ENCODE measurements at regions of chr2 and their contacts with region 1.

Region 1: GRCh38 chr2:60881047-60881932 is at the start of gene REL:
- DNase-seq: peak; percentile 96
- H3K4me3 Mint-ChIP-seq: peak within 1 kb of the TSS; percentile 91
- H3K27ac Mint-ChIP-seq: peak within 1 kb of the TSS; percentile 97
- H3K4me1 Mint-ChIP-seq: peaks cover 9% of the 10 kb centered on the region
- H3K27me3 Mint-ChIP-seq: no peaks in the 10 kb centered on the region
- CTCF ChIP-seq: no peak
- total RNA-seq, gene REL: 20.3 and 23.4 TPM in 2 replicates

Region 2: GRCh38 chr2:59706729-59707128 is 1174.6 kb before region 1 on chr2:
- CTCF ChIA-PET with region 1: no interaction called
- intact Hi-C with region 1: no loop called
- DNase-seq: no peak
- H3K4me3 Mint-ChIP-seq: no peak overlapping the region
- H3K27ac Mint-ChIP-seq: no peak overlapping the region
- H3K4me1 Mint-ChIP-seq: no peaks in the 10 kb centered on the region
- H3K27me3 Mint-ChIP-seq: no peaks in the 10 kb centered on the region
- CTCF ChIP-seq: no peak

Region 3: DNA sequence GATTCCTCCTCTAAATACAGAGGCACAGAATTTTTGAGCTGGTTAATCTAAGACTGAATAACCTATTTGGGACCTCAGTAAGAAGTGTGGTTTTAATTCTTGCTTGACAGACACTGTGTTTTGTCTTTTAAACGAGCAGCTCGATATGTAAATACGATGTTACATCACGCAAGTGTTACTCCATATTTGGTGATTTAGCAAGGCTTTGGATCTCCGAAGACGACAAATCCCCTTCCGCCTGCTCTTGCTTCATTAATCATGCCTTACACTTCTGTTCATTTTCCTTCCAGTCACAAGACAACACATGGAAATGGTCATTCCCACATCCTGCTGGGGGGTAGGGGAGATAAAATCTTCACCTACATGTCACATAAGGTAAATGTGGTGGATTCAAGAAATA is 337.2 kb before region 1 on chr2:
- CTCF ChIA-PET with region 1: no interaction called
- intact Hi-C with region 1: no loop called
- DNase-seq: no peak
- H3K4me3 Mint-ChIP-seq: no peak overlapping the region
- H3K27ac Mint-ChIP-seq: no peak overlapping the region
- H3K4me1 Mint-ChIP-seq: no peaks in the 10 kb centered on the region
- H3K27me3 Mint-ChIP-seq: peaks cover 67% of the 10 kb centered on the region
- CTCF ChIP-seq: no peak

Region 4: DNA sequence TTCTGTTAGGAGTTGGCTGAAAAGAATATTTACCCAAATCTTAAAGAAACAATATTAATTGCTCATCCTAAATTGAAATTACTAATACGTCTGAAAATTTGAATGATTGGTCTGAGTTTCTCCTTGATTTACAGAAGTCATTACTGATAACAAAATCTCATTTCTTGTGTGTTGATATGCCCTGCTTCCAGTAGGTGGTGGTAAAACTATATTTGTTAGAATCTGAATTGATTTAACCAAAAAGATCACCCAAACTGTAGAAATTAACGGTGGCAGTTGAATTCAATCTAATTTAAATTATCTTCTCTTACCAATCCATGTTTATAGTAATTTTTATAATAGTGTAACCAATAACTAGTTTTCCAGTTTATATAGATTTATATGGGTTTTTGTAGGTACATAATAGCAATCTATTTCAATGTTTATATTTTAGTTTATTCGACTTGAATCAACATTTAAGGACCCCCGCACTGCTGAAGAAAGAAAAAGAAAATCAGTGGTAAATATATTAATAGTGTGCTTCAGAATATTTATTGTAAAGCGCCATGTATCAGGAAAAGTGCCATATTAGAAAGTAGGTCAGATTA is 86.9 kb before region 1 on chr2:
- CTCF ChIA-PET with region 1: no interaction called
- intact Hi-C with region 1: loop called (anchors 5 kb)
- DNase-seq: no peak
- H3K4me3 Mint-ChIP-seq: no peak overlapping the region
- H3K27ac Mint-ChIP-seq: no peak overlapping the region
- H3K4me1 Mint-ChIP-seq: no peaks in the 10 kb centered on the region
- H3K27me3 Mint-ChIP-seq: no peaks in the 10 kb centered on the region
- CTCF ChIP-seq: no peak

Region 5: DNA sequence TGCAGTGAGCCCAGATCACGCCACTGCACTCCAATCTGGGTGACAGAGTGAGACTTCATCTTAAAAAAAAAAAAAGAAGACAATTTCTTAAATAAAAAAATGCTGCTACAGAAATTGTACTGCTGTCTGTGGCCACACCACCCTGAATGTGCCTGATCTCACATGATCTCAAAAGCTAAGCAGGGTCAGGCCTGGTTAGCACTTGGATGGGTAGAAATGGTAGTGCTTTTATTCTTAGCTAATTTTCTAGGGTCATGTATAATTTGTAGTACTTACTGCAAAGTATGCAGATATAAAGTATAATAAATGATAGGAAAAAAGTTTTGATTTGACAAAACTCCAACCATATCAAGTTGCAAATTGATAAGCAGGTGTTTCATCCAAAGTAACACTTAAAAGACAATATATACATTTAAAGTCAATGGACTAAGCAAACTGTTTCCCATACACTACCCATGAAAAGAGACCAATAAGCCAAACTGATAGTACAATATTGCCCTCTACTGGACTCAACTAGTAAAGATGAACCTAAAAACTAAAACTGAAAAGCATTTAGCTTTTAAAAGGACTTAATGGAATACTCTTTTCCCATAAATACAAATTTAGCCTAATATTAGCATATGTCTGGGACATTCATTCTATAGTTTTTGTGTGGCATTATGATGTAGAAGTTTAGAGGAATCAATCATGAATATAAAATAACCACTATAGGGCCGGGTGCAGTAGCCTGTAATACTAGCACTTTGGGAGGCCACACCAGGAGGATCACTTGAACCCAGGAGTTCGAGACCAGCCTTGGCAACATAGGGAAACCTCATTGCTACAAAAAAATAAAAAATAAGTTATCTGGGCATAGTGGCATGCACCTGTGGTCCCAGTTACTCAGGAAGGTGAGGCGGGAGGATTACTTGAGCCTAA is 117.6 kb after region 1 on chr2:
- CTCF ChIA-PET with region 1: interaction called, 5 read pairs
- intact Hi-C with region 1: loop called (anchors 5 kb)
- DNase-seq: no peak
- H3K4me3 Mint-ChIP-seq: no peak overlapping the region
- H3K27ac Mint-ChIP-seq: no peak overlapping the region
- H3K4me1 Mint-ChIP-seq: no peaks in the 10 kb centered on the region
- H3K27me3 Mint-ChIP-seq: no peaks in the 10 kb centered on the region
- CTCF ChIP-seq: peak; percentile 39

Region 6: GRCh38 chr2:61016808-61017555 is 135.7 kb after region 1 on chr2:
- CTCF ChIA-PET with region 1: no interaction called
- intact Hi-C with region 1: loop called (anchors 5 kb)
- DNase-seq: peak; percentile 80
- H3K4me3 Mint-ChIP-seq: peak overlapping the region; percentile 86
- H3K27ac Mint-ChIP-seq: peak overlapping the region; percentile 91
- H3K4me1 Mint-ChIP-seq: peaks cover 26% of the 10 kb centered on the region
- H3K27me3 Mint-ChIP-seq: no peaks in the 10 kb centered on the region
- CTCF ChIP-seq: no peak

Measured in Calu3 (cell line).